Ovary (tissue), 10 donors: ENCODE measurements at regions of chr1 and their contacts with region 1.

Region 1: DNA sequence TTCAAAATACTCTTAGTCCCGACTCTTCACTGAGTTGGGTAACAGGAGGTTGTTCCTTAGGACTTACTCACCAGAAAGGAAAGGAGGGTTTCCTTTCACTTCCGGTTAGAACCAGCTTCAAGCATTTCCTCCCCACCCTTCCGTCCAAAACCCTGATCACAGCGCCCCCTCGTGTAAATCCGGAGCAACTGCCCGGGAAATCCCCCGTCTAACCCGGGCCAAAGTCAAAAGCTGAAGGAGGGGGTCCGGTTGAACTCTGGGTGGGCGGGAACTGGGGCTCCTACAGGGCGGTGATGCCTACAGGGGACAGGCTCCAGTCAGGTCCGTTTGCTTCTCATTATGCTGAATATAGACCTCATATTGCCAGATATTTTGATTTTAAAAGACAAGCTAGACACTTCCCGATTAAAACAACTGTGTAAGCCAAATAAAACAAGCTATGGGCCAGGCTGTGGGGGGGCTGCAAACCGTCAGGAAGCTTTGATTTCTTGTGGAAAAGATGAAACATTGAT is 15.0 kb upstream of the MTARC2 start:
- DNase-seq: peak; percentile 59 to 79 (median 76)
- H3K4me3 ChIP-seq: no peak overlapping the region
- H3K27ac ChIP-seq: no peak overlapping the region
- H3K4me1 ChIP-seq: peaks cover 3% of the 10 kb centered on the region
- H3K27me3 ChIP-seq: no peaks in the 10 kb centered on the region
- CTCF ChIP-seq: peak; percentile 48 to 60 (median 57)
- EP300 ChIP-seq: no peak
- POLR2A ChIP-seq: no peak

Region 2: GRCh38 chr1:220690140-220691025 is 42.8 kb before region 1 on chr1 and contains the start of gene C1orf115:
- intact Hi-C with region 1: loop called in 2 of 4 experiments (anchors 2 to 5 kb)
- DNase-seq: peak; percentile 72 to 90 (median 78)
- H3K4me3 ChIP-seq: peak within 1 kb of the TSS; percentile 49
- H3K27ac ChIP-seq: peak within 1 kb of the TSS; percentile 5 to 58
- H3K4me1 ChIP-seq: peaks cover 2% of the 10 kb centered on the region
- H3K27me3 ChIP-seq: no peaks in the 10 kb centered on the region
- CTCF ChIP-seq: peak; percentile 91 to 97 (median 95)
- EP300 ChIP-seq: no peak
- POLR2A ChIP-seq: peak; percentile 30
- total RNA-seq, gene C1orf115: 10.0 to 19.8 (median 13.2) TPM